K562 (cell line): ENCODE measurements at regions of chrX and their contacts with region 1.

Region 1: DNA sequence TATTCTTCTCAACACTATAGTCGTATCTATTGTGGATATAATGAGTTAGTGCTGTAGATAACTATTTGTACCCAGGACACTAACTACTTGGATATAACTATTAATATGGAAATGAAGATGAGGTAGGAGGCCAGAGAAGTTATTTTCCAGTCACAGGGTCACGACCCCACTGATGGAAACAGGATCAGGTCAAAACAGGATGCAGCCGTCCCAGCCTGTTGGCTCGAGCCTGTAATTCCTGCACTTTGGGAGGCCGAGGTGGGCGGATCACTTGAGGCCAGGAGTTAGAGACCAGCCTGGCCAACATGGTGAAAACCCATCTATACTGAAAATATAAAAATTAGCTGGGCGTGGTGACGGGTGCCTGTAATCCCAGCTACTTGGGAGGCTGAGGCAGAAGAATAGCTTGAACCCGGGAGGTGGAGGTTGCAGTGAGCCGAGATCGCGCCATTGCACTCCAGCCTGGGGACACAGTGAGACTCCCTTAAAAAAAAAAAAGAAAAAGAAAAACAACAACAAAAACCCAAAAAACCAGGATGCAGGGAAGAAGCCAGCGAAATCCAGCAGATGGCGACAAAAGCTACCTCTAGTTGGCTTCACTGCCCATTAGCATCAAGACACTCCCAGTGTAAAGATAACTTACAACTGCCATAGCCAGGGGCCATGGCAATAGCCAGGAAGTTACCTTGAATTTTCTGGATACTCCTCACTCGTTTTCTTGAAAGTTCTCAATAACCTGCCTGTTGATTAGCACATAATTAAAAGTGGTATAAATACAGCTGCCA is 37.9 kb upstream of the NKAP start:
- DNase-seq: peak in 2 of 4 experiments; percentile 51 to 67
- ATAC-seq: peak; percentile 93
- H3K4me3 ChIP-seq: no peak overlapping the region
- H3K27ac ChIP-seq: no peak overlapping the region
- H3K4me1 ChIP-seq: no peaks in the 10 kb centered on the region
- H3K27me3 ChIP-seq: no peaks in the 10 kb centered on the region; a peak in 2 of 5 replicates
- CTCF ChIP-seq: peak; percentile 61 to 78 (median 62)
- EP300 ChIP-seq: no peak
- POLR2A ChIP-seq: no peak
- RAD21 ChIP-seq: peak; percentile 25 to 66; a peak in 3 of 4 replicates

Region 2: GRCh38 chrX:120021927-120022326 is 40.4 kb after region 1 on chrX:
- CTCF ChIA-PET with region 1: no interaction called
- POLR2A ChIA-PET with region 1: no interaction called
- in situ Hi-C with region 1: no loop called
- intact Hi-C with region 1: loop called (anchors 2 kb)
- DNase-seq: peak; percentile 9 to 67 (median 22)
- ATAC-seq: peak; percentile 84
- H3K4me3 ChIP-seq: no peak overlapping the region
- H3K27ac ChIP-seq: no peak overlapping the region
- H3K4me1 ChIP-seq: peaks cover 4 to 9% of the 10 kb centered on the region in 2 experiments; a peak in 4 of 5 replicates
- H3K27me3 ChIP-seq: peaks cover 2 to 16% of the 10 kb centered on the region in 2 experiments; a peak in 3 of 5 replicates
- CTCF ChIP-seq: peak in 2 of 3 experiments; percentile 8 to 38; a peak in 2 of 6 replicates
- EP300 ChIP-seq: peak; percentile 80
- POLR2A ChIP-seq: no peak
- RAD21 ChIP-seq: peak in 1 of 2 experiments; percentile 45; a peak in 2 of 4 replicates